T-cell (primary cell): ENCODE measurements at regions of chr6 and their contacts with region 1.

Region 1: DNA sequence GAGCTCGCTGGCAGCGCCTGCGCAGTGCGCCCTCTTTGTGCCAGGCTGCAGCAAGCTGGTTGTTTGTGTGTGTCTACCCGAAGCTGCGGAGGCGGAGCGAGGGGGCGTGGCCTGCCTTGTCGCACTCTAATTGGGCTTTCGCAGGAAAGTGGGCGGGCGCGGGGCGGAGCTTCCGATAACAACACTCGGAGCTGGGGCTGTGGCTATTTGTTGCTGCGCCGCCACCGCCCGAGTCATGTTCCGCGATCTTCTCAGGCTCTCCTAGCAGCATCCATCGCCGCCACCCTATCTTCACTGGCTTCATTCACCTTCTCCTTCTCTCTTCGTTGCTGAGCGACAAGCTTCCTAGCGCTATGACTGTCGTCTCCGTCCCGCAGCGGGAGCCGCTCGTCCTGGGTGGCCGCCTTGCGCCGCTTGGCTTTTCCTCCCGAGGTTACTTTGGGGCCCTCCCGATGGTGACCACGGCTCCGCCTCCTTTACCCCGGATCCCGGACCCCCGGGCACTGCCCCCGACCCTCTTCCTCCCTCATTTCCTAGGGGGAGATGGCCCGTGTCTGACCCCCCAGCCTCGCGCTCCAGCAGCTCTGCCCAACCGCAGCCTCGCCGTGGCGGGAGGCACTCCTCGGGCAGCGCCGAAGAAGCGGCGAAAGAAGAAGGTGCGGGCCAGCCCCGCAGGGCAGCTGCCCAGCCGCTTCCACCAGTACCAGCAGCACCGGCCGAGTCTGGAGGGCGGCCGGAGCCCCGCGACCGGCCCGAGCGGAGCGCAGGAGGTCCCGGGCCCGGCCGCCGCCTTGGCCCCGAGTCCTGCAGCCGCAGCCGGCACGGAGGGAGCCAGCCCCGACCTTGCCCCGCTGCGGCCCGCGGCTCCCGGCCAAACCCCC is at the start of gene PNRC1:
- DNase-seq: peak; percentile 99 to 100 (median 100)
- ATAC-seq: peak; percentile 71 to 81 (median 78)
- H3K4me3 ChIP-seq: peak within 1 kb of the TSS; percentile 73 to 98
- H3K4me3 Mint-ChIP-seq: peak within 1 kb of the TSS; percentile 92 to 96 (median 94)
- H3K27ac ChIP-seq: peak within 1 kb of the TSS; percentile 98
- H3K27ac Mint-ChIP-seq: peak within 1 kb of the TSS; percentile 97 to 99
- H3K4me1 ChIP-seq: peaks cover 30 to 36% of the 10 kb centered on the region in 2 experiments
- H3K4me1 Mint-ChIP-seq: peaks cover 35 to 47% (median 42%) of the 10 kb centered on the region in 3 donors
- H3K27me3 ChIP-seq: no peaks in the 10 kb centered on the region
- H3K27me3 Mint-ChIP-seq: no peaks in the 10 kb centered on the region
- total RNA-seq, gene PNRC1: 421 to 792 (median 481) TPM

Region 2: GRCh38 chr6:87407901-87408720 is 1672.7 kb before region 1 on chr6 and contains the start of gene CFAP206:
- CTCF ChIA-PET with region 1: no interaction called
- POLR2A ChIA-PET with region 1: interaction called in 1 of 2 experiments, 14 read pairs
- DNase-seq: peak; percentile 61 to 90 (median 73)
- ATAC-seq: peak; percentile 83 to 88 (median 86)
- H3K4me3 ChIP-seq: peak within 1 kb of the TSS; percentile 89 to 92
- H3K4me3 Mint-ChIP-seq: peak within 1 kb of the TSS; percentile 83 to 86 (median 83)
- H3K27ac ChIP-seq: peak within 1 kb of the TSS; percentile 40
- H3K27ac Mint-ChIP-seq: peak within 1 kb of the TSS; percentile 65 to 85
- H3K4me1 ChIP-seq: peaks cover 5 to 6% of the 10 kb centered on the region in 2 experiments
- H3K4me1 Mint-ChIP-seq: peaks cover 5 to 7% (median 6%) of the 10 kb centered on the region in 3 donors
- H3K27me3 ChIP-seq: peaks cover 4 to 10% of the 10 kb centered on the region in 2 experiments
- H3K27me3 Mint-ChIP-seq: peaks cover 10% of the 10 kb centered on the region in 2 donors
- total RNA-seq, gene CFAP206: 0.35 TPM in 1 of 5 donors, not detected in the others

Region 3: DNA sequence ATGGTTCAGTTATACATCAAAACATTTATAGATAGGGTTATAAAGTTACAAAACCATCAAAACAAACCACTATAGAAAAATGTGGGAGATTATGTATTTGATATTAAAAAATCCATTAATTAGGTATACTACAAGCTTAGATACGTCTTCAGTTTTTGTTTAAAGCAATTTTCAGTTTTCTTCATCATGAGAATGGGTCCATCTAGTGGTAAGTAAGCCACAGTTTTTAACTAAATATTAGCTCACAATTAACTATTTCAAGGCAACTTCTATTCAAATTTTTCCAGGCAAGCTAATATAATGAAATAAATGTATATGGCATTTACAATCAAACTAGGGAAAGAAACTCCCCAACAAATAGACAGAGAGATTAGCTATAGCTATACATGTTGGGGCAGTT is 161.8 kb before region 1 on chr6:
- CTCF ChIA-PET with region 1: no interaction called
- POLR2A ChIA-PET with region 1: interaction called in 1 of 2 experiments, 10 read pairs
- DNase-seq: no peak
- ATAC-seq: no peak
- H3K4me3 ChIP-seq: no peak overlapping the region
- H3K4me3 Mint-ChIP-seq: no peak overlapping the region
- H3K27ac ChIP-seq: no peak overlapping the region
- H3K27ac Mint-ChIP-seq: no peak overlapping the region
- H3K4me1 ChIP-seq: peaks cover 0 to 3% of the 10 kb centered on the region in 2 experiments
- H3K4me1 Mint-ChIP-seq: peaks cover 29 to 30% (median 29%) of the 10 kb centered on the region in 3 donors
- H3K27me3 ChIP-seq: no peaks in the 10 kb centered on the region
- H3K27me3 Mint-ChIP-seq: no peaks in the 10 kb centered on the region

Region 4: DNA sequence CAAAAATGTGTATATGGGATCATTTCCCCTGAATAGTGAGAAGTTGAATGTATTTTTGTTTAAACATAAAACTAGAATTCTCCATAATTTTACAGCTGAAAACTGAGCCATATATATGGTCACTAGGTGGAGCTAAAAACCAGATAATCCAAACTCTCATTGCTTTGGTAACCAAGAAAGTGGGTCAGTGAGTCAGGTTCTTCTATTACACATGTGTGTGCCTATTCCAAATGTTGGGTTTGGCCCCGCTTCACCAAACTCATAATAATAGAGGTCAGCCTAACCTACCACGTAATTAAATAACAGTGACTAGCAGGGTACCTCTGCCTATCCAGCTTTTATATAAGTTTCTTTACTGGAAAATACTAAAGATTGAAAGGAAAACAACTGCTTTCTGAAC is 98.1 kb before region 1 on chr6:
- CTCF ChIA-PET with region 1: interaction called, 3 to 18 read pairs
- POLR2A ChIA-PET with region 1: interaction called, 3 to 5 read pairs
- DNase-seq: peak in 3 of 35 experiments; percentile 8 to 78 (median 18)
- ATAC-seq: peak; percentile 72 to 89 (median 81)
- H3K4me3 ChIP-seq: no peak overlapping the region
- H3K4me3 Mint-ChIP-seq: no peak overlapping the region
- H3K27ac ChIP-seq: no peak overlapping the region
- H3K27ac Mint-ChIP-seq: no peak overlapping the region
- H3K4me1 ChIP-seq: no peaks in the 10 kb centered on the region
- H3K4me1 Mint-ChIP-seq: no peaks in the 10 kb centered on the region
- H3K27me3 ChIP-seq: no peaks in the 10 kb centered on the region
- H3K27me3 Mint-ChIP-seq: peaks cover 0 to 4% of the 10 kb centered on the region in 2 donors

Region 5: GRCh38 chr6:89009624-89010059 is 71.1 kb before region 1 on chr6:
- CTCF ChIA-PET with region 1: no interaction called
- POLR2A ChIA-PET with region 1: no interaction called
- DNase-seq: peak in 1 of 35 experiments; percentile 4
- ATAC-seq: no peak
- H3K4me3 ChIP-seq: no peak overlapping the region
- H3K4me3 Mint-ChIP-seq: no peak overlapping the region
- H3K27ac ChIP-seq: no peak overlapping the region
- H3K27ac Mint-ChIP-seq: no peak overlapping the region
- H3K4me1 ChIP-seq: no peaks in the 10 kb centered on the region
- H3K4me1 Mint-ChIP-seq: peaks cover 11 to 14% (median 12%) of the 10 kb centered on the region in 3 donors
- H3K27me3 ChIP-seq: no peaks in the 10 kb centered on the region
- H3K27me3 Mint-ChIP-seq: no peaks in the 10 kb centered on the region

Region 6: DNA sequence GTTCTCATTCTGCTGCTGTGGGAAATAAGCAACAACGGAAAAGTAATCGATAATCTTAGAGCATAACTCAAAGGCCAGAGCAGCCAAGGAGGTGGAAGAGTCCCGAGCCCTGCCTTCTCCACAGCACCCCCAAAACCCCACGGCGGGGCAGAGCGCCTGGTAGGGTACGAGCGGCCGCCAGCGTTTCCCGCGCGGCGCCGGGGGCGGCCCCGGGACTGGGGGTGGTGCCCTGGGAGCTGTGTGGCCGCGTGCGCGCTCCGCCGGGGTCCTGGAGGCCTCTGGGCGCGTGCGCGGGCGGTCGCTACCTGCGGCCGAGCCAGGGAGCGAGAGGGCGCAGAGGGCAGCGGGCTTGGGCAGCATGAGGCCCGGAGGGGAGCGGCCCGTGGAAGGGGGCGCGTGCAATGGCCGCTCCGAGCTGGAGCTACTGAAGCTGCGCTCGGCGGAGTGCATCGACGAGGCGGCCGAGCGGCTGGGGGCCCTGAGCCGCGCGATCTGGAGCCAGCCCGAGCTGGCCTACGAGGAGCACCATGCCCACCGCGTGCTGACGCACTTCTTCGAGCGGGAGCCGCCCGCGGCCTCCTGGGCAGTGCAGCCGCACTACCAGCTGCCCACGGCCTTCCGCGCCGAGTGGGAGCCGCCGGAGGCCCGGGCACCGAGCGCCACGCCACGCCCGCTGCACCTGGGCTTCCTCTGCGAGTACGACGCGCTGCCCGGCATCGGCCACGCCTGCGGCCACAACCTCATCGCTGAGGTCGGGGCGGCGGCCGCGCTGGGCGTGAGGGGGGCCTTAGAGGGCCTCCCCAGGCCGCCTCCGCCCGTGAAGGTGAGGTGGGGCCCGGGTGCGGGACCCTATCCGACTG is 65.2 kb after region 1 on chr6 and contains the start of gene PM20D2:
- CTCF ChIA-PET with region 1: interaction called, 3 to 20 read pairs
- POLR2A ChIA-PET with region 1: interaction called, 13 read pairs
- DNase-seq: peak in 34 of 35 experiments; percentile 22 to 71 (median 45)
- ATAC-seq: peak; percentile 78 to 84 (median 82)
- H3K4me3 ChIP-seq: peak within 1 kb of the TSS; percentile 59 to 81
- H3K4me3 Mint-ChIP-seq: peak within 1 kb of the TSS; percentile 87 to 97 (median 93)
- H3K27ac ChIP-seq: peak within 1 kb of the TSS; percentile 83
- H3K27ac Mint-ChIP-seq: peak within 1 kb of the TSS; percentile 90 to 91
- H3K4me1 ChIP-seq: peaks cover 5 to 9% of the 10 kb centered on the region in 2 experiments
- H3K4me1 Mint-ChIP-seq: peaks cover 25 to 34% (median 29%) of the 10 kb centered on the region in 3 donors
- H3K27me3 ChIP-seq: no peaks in the 10 kb centered on the region
- H3K27me3 Mint-ChIP-seq: no peaks in the 10 kb centered on the region
- total RNA-seq, gene PM20D2: 7.5 to 12.3 (median 10.1) TPM

Region 7: GRCh38 chr6:89260310-89260709 is 179.5 kb after region 1 on chr6:
- CTCF ChIA-PET with region 1: interaction called in 1 of 2 experiments, 4 read pairs
- POLR2A ChIA-PET with region 1: interaction called in 1 of 2 experiments, 10 read pairs
- DNase-seq: no peak
- ATAC-seq: no peak
- H3K4me3 ChIP-seq: no peak overlapping the region
- H3K4me3 Mint-ChIP-seq: no peak overlapping the region
- H3K27ac ChIP-seq: no peak overlapping the region
- H3K27ac Mint-ChIP-seq: no peak overlapping the region
- H3K4me1 ChIP-seq: no peaks in the 10 kb centered on the region
- H3K4me1 Mint-ChIP-seq: peaks cover 0 to 3% (median 0%) of the 10 kb centered on the region in 3 donors
- H3K27me3 ChIP-seq: peaks cover 0 to 5% of the 10 kb centered on the region in 2 experiments
- H3K27me3 Mint-ChIP-seq: no peaks in the 10 kb centered on the region